Activated B cell treated with CpG ODN at 0.5 μM for 24 hours (primary cell): ENCODE measurements at regions of chr11 and their contacts with region 1.

Region 1: GRCh38 chr11:44727373-44728287 is 868 bp downstream of the TSPAN18 start:
- DNase-seq: peak; percentile 72
- ATAC-seq: peak; percentile 71
- H3K4me3 Mint-ChIP-seq: peak overlapping the region; percentile 86
- H3K27ac Mint-ChIP-seq: no peak overlapping the region
- H3K4me1 Mint-ChIP-seq: peaks cover 22% of the 10 kb centered on the region
- H3K27me3 Mint-ChIP-seq: peaks cover 15% of the 10 kb centered on the region
- CTCF ChIP-seq: no peak

Region 2: GRCh38 chr11:44634401-44635281 is 93.0 kb before region 1 on chr11:
- CTCF ChIA-PET with region 1: no interaction called
- POLR2A ChIA-PET with region 1: no interaction called
- intact Hi-C with region 1: loop called (anchors 5 kb)
- DNase-seq: no peak
- ATAC-seq: peak; percentile 60
- H3K4me3 Mint-ChIP-seq: no peak overlapping the region
- H3K27ac Mint-ChIP-seq: no peak overlapping the region
- H3K4me1 Mint-ChIP-seq: peaks cover 7% of the 10 kb centered on the region
- H3K27me3 Mint-ChIP-seq: peaks cover 23% of the 10 kb centered on the region
- CTCF ChIP-seq: no peak

Region 3: DNA sequence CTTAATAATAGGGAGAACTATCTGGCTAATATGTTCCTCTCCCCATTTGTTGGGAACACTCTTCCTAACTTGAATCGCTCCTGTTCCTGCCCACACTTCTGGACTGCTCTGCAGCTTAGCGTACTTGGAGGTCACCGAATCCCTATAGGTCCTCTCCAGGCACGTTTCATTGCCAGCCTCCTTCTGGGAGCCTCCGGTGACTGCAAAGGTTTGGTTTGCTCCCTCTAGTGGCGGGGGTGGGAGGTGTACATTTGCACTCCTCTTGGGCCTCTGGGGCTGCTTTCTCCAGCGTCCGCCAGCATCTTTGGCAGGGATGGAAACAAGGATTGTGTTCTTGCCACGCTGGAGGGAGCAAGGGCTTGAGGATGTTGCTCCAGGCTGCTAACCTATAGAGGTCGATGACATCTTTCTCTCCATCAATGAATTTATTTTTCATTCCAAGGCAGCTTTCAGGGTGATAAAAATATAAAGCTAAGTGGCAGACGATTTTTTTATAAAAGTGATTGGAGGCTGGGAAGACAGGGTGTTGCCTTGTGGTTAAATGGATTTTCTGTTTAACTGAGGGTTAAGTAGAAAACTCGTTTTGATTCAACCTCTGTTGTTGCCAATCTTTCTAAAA is 47.8 kb after region 1 on chr11:
- CTCF ChIA-PET with region 1: interaction called, 4 read pairs
- POLR2A ChIA-PET with region 1: no interaction called
- intact Hi-C with region 1: loop called (anchors 1 kb)
- DNase-seq: peak; percentile 37
- ATAC-seq: peak; percentile 64
- H3K4me3 Mint-ChIP-seq: no peak overlapping the region
- H3K27ac Mint-ChIP-seq: peak overlapping the region; percentile 4
- H3K4me1 Mint-ChIP-seq: peaks cover 3% of the 10 kb centered on the region
- H3K27me3 Mint-ChIP-seq: no peaks in the 10 kb centered on the region
- CTCF ChIP-seq: peak; percentile 51

Region 4: GRCh38 chr11:44785856-44786606 is 58.4 kb after region 1 on chr11:
- CTCF ChIA-PET with region 1: no interaction called
- POLR2A ChIA-PET with region 1: no interaction called
- intact Hi-C with region 1: no loop called
- DNase-seq: no peak
- ATAC-seq: no peak
- H3K4me3 Mint-ChIP-seq: no peak overlapping the region
- H3K27ac Mint-ChIP-seq: no peak overlapping the region
- H3K4me1 Mint-ChIP-seq: no peaks in the 10 kb centered on the region
- H3K27me3 Mint-ChIP-seq: no peaks in the 10 kb centered on the region
- CTCF ChIP-seq: no peak

Region 5: GRCh38 chr11:44893846-44894617 is 166.4 kb after region 1 on chr11:
- CTCF ChIA-PET with region 1: no interaction called
- POLR2A ChIA-PET with region 1: no interaction called
- intact Hi-C with region 1: loop called (anchors 5 kb)
- DNase-seq: no peak
- ATAC-seq: peak; percentile 60
- H3K4me3 Mint-ChIP-seq: no peak overlapping the region
- H3K27ac Mint-ChIP-seq: no peak overlapping the region
- H3K4me1 Mint-ChIP-seq: no peaks in the 10 kb centered on the region
- H3K27me3 Mint-ChIP-seq: peaks cover 8% of the 10 kb centered on the region
- CTCF ChIP-seq: no peak

Region 6: GRCh38 chr11:45147017-45147728 is 419.5 kb after region 1 on chr11:
- CTCF ChIA-PET with region 1: no interaction called
- POLR2A ChIA-PET with region 1: no interaction called
- intact Hi-C with region 1: loop called (anchors 2 kb)
- DNase-seq: peak; percentile 92
- ATAC-seq: peak; percentile 98
- H3K4me3 Mint-ChIP-seq: peak overlapping the region; percentile 87
- H3K27ac Mint-ChIP-seq: peak overlapping the region; percentile 77
- H3K4me1 Mint-ChIP-seq: peaks cover 33% of the 10 kb centered on the region
- H3K27me3 Mint-ChIP-seq: peaks cover 7% of the 10 kb centered on the region
- CTCF ChIP-seq: no peak

Region 7: DNA sequence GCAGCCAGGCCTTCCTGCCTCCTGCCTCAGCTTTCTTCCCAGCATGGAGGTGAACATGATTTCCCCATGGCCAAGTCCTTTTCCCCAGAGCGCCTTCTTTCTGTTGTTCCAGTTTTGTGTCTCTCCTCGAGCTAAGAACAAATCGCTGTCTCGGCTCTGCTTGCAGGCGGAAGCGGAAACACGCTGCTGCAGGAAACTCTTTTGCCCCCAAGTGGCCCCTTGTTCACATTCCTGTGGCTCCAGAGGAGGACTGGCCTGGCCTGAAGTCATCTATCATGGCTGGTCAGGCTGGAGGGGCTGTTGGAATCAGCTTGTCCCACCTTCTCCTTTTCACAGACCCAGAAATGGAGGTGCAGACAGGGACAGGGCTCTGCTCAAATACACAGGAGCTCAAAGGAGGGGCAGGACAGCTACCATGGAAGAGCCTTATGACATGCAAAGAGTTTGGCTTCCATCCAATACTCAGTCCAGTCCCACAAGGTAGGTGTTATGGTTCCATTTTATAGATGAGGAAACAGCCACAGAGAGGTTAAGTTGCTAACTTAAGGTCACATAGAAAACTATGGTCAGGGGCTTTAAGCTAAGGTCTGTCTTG is 740.7 kb after region 1 on chr11:
- CTCF ChIA-PET with region 1: no interaction called
- POLR2A ChIA-PET with region 1: no interaction called
- intact Hi-C with region 1: no loop called
- DNase-seq: no peak
- ATAC-seq: no peak
- H3K4me3 Mint-ChIP-seq: no peak overlapping the region
- H3K27ac Mint-ChIP-seq: no peak overlapping the region
- H3K4me1 Mint-ChIP-seq: no peaks in the 10 kb centered on the region
- H3K27me3 Mint-ChIP-seq: no peaks in the 10 kb centered on the region
- CTCF ChIP-seq: no peak